ENCODE measurements at regions of chr1 and their contacts with region 1.

Region 1: GRCh38 chr1:74703386-74704182 is 29.3 kb downstream of the CRYZ start:
- H3K4me3 ChIP-seq: no peak overlapping the region
- H3K27ac ChIP-seq: no peak overlapping the region
- H3K4me1 ChIP-seq: no peaks in the 10 kb centered on the region
- CTCF ChIP-seq: no peak

Region 2: GRCh38 chr1:74689621-74690363 is 13.8 kb before region 1 on chr1:
- CTCF ChIA-PET with region 1: interaction called, 32 read pairs
- POLR2A ChIA-PET with region 1: no interaction called
- H3K4me3 ChIP-seq: no peak overlapping the region
- H3K27ac ChIP-seq: no peak overlapping the region
- H3K4me1 ChIP-seq: no peaks in the 10 kb centered on the region
- CTCF ChIP-seq: 0 out of 2 replicates have a peak, but pooled peaks have one; percentile 51

Measured in HEK293 (cell line).